Activated CD4-positive, alpha-beta T cell treated with anti-CD3 and anti-CD28 coated beads for 36 hours (primary cell): ENCODE measurements at regions of chr7 and their contacts with region 1.

Region 1: GRCh38 chr7:17234398-17235031 is 63.9 kb upstream of the AHR start:
- DNase-seq: peak; percentile 76
- ATAC-seq: peak; percentile 88
- H3K4me3 Mint-ChIP-seq: peak overlapping the region; percentile 65
- H3K27ac Mint-ChIP-seq: peak overlapping the region; percentile 94
- H3K4me1 Mint-ChIP-seq: peaks cover 44% of the 10 kb centered on the region
- H3K27me3 Mint-ChIP-seq: no peaks in the 10 kb centered on the region

Region 2: DNA sequence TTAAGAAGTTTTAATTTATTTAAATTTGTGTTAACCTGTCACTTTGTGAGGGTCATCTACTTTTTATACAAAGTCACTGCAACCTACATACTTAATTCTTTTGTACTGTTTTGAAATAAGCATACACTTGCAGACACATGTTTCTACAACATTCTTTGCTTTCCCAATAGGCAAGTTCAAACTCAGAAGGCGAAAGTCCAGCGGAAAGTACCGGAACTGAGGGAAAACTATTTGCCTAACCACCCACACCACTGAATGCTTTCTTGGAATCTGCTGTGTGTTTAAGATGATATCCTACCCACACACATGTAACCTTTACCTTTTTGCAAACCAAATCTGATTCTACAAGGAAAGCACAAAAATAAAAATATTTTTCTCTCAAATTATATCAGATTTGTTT is 213.3 kb before region 1 on chr7:
- CTCF ChIA-PET with region 1: no interaction called
- POLR2A ChIA-PET with region 1: no interaction called
- intact Hi-C with region 1: loop called in 1 of 2 experiments (anchors 1 kb)
- DNase-seq: no peak
- ATAC-seq: no peak
- H3K4me3 Mint-ChIP-seq: no peak overlapping the region
- H3K27ac Mint-ChIP-seq: no peak overlapping the region
- H3K4me1 Mint-ChIP-seq: peaks cover 12% of the 10 kb centered on the region
- H3K27me3 Mint-ChIP-seq: peaks cover 7% of the 10 kb centered on the region

Region 3: DNA sequence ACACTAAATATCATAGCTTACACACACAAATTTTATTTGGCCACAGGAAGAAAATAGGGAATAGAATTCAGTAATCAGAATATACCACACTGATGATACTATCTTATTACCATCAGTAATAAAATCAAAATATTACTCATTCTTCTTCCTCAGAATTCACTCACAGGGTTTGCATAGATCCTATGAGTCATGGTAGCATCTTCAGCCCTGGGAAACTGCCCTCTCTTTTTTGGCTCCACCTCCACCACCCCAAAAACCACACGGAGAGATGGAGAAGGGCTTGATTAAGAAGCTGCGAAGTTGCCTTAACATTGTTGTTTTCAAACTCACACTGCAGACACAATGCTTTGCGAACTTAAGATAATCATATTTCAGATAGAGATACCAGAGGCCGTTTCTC is 90.2 kb before region 1 on chr7:
- CTCF ChIA-PET with region 1: no interaction called
- POLR2A ChIA-PET with region 1: no interaction called
- intact Hi-C with region 1: loop called (anchors 1 kb)
- DNase-seq: peak; percentile 79
- ATAC-seq: peak; percentile 88
- H3K4me3 Mint-ChIP-seq: peak overlapping the region; percentile 53
- H3K27ac Mint-ChIP-seq: peak overlapping the region; percentile 83
- H3K4me1 Mint-ChIP-seq: peaks cover 51% of the 10 kb centered on the region
- H3K27me3 Mint-ChIP-seq: peaks cover 2% of the 10 kb centered on the region

Region 4: DNA sequence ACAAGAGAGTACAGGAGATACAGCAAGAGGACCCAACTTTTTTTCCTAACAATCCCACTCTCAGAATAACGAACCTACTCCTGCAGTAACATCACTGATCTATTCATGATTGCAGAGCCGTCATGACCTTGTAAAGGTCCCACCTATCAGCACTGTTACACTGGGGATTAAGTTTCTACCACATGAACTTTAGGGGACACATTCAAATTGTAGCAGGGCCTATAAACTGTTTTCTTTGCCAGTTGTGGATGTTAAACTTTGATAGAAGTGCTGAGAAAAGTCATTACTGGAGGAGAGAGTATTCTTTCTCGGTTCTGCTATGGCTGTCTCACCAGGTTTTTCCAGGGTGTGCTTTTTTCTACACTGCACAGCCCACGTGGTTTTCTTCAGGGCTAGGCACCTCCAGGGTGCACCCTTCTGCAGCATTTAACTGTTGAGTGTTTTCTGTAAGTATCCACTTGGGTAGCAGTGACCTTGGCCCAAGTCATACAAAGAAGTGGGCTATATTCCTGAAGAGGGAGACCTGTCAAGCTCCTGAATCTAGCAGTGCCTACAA is 67.6 kb before region 1 on chr7:
- CTCF ChIA-PET with region 1: no interaction called
- POLR2A ChIA-PET with region 1: no interaction called
- intact Hi-C with region 1: loop called (anchors 1 to 2 kb)
- DNase-seq: peak; percentile 65
- ATAC-seq: peak; percentile 94
- H3K4me3 Mint-ChIP-seq: no peak overlapping the region
- H3K27ac Mint-ChIP-seq: peak overlapping the region; percentile 20
- H3K4me1 Mint-ChIP-seq: peaks cover 36% of the 10 kb centered on the region
- H3K27me3 Mint-ChIP-seq: no peaks in the 10 kb centered on the region

Region 5: DNA sequence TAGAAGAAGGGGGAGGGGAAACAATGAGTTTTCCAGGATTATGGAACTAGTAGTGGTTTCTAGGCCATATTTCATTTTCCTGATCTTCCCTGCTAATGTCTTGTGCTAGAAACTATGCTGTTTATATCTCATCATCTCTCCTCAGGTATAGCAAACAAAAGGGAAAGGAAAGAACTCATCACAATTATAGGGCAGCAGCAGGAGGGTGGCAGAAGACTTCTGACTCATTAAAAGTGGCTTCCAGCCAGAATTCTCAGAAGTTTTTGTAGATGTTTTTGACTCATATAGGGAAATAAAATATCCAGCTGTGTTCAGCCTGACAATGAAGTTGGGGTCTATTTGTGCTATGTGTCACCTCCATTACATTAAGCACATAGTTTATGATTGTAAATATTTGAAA is 70.4 kb after region 1 on chr7:
- CTCF ChIA-PET with region 1: interaction called, 4 read pairs
- POLR2A ChIA-PET with region 1: interaction called, 3 read pairs
- intact Hi-C with region 1: loop called (anchors 1 kb)
- DNase-seq: peak; percentile 37
- ATAC-seq: peak; percentile 74
- H3K4me3 Mint-ChIP-seq: peak overlapping the region; percentile 58
- H3K27ac Mint-ChIP-seq: peak overlapping the region; percentile 86
- H3K4me1 Mint-ChIP-seq: peaks cover 31% of the 10 kb centered on the region
- H3K27me3 Mint-ChIP-seq: no peaks in the 10 kb centered on the region

Region 6: GRCh38 chr7:17940302-17940883 is 705.9 kb after region 1 on chr7 and contains the start of gene SNX13:
- CTCF ChIA-PET with region 1: no interaction called
- POLR2A ChIA-PET with region 1: no interaction called
- intact Hi-C with region 1: loop called in 1 of 2 experiments (anchors 5 kb)
- DNase-seq: peak; percentile 95
- ATAC-seq: peak; percentile 92
- H3K4me3 Mint-ChIP-seq: peak within 1 kb of the TSS; percentile 89
- H3K27ac Mint-ChIP-seq: peak within 1 kb of the TSS; percentile 91
- H3K4me1 Mint-ChIP-seq: peaks cover 46% of the 10 kb centered on the region
- H3K27me3 Mint-ChIP-seq: no peaks in the 10 kb centered on the region
- total RNA-seq, gene SNX13: 23.9 to 25.5 TPM